ENCODE measurements at regions of chr5 and their contacts with region 1.

Region 1: GRCh38 chr5:55601204-55601618 is 66.4 kb upstream of the PLPP1 start:
- DNase-seq: peak; percentile 74 to 90
- ATAC-seq: peak; percentile 71 to 91 (median 85)
- H3K4me3 ChIP-seq: peak overlapping the region in 6 of 10 donors; percentile 18 to 46 (median 41)
- H3K27ac ChIP-seq: peak overlapping the region; percentile 86 to 98 (median 94)
- H3K4me1 ChIP-seq: peaks cover 21 to 86% (median 78%) of the 10 kb centered on the region in 9 donors
- H3K27me3 ChIP-seq: no peaks in the 10 kb centered on the region
- CTCF ChIP-seq: no peak

Region 2: GRCh38 chr5:55407059-55407684 is 194.0 kb before region 1 on chr5:
- intact Hi-C with region 1: loop called in 1 of 10 experiments (anchors 5 kb)
- DNase-seq: peak in 1 of 2 donors; percentile 20
- ATAC-seq: peak in 7 of 8 donors; percentile 53 to 90 (median 85)
- H3K4me3 ChIP-seq: no peak overlapping the region
- H3K27ac ChIP-seq: no peak overlapping the region
- H3K4me1 ChIP-seq: peaks cover 0 to 16% (median 7%) of the 10 kb centered on the region in 9 donors
- H3K27me3 ChIP-seq: no peaks in the 10 kb centered on the region
- CTCF ChIP-seq: peak; percentile 55 to 92 (median 80)

Region 3: DNA sequence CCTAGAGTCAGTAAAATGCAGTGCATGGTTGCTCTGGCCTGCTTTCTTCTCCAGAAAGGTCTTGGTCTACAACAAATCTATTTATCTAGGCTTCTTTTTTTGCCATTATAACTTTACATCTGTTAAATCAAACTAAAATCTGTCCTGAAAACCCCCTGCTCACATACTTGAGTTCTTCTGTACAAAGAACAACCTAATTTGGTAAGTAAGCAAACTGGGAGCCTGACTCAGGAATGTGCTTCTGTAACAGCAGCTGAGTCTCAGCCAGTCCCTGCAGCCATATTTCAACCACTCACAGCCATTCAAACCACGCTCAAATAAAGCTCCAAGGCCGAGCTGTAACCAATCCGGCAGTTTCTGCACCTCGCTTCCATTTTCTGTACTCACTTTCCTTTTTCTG is 162.2 kb before region 1 on chr5:
- intact Hi-C with region 1: loop called in 2 of 10 experiments (anchors 5 to 10 kb)
- DNase-seq: no peak
- ATAC-seq: peak in 5 of 8 donors; percentile 33 to 52 (median 46)
- H3K4me3 ChIP-seq: no peak overlapping the region
- H3K27ac ChIP-seq: peak overlapping the region; percentile 30 to 90 (median 80)
- H3K4me1 ChIP-seq: peaks cover 21 to 78% (median 54%) of the 10 kb centered on the region in 9 donors
- H3K27me3 ChIP-seq: no peaks in the 10 kb centered on the region
- CTCF ChIP-seq: no peak

Region 4: DNA sequence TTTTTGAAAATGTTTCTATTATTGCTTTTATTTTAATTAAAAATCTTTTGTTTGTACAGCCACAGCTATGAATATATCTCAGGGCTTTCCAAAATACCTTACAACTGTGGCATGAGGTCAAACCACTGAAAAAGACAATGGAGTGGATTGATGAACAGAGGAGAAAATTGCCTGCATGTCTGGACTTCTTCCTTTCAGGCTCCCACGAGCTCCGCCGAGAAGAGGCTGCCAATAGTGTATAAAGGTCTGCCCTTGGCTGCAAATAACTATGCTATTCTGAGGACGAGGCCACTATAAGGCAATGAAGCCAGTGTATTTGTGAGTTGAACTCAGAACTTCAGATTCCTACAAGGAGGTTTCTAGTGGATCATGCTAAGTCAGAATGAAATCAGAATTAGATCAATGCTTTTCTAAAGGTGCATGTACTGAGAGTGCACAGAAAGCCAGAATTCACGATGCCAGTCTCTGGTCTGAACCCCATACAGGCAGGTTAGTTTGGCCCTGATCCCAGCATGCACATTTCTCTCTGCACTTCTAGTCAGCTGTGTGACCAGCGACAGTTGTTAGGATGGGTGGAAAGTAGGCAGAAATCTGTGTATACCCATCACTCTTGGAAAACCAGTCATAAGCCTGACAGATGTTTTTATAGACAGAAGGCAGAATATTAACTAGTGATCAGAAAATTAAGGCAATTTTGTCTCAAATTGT is 23.7 kb before region 1 on chr5:
- intact Hi-C with region 1: loop called in 2 of 10 experiments (anchors 1 to 2 kb)
- DNase-seq: peak; percentile 50 to 80
- ATAC-seq: peak; percentile 90 to 96 (median 92)
- H3K4me3 ChIP-seq: no peak overlapping the region
- H3K27ac ChIP-seq: peak overlapping the region; percentile 63 to 93 (median 77)
- H3K4me1 ChIP-seq: peaks cover 14 to 56% (median 48%) of the 10 kb centered on the region in 9 donors
- H3K27me3 ChIP-seq: no peaks in the 10 kb centered on the region
- CTCF ChIP-seq: no peak

Region 5: GRCh38 chr5:55675119-55675518 is 73.9 kb after region 1 on chr5:
- intact Hi-C with region 1: loop called in 4 of 10 experiments (anchors 5 to 10 kb)
- DNase-seq: no peak
- ATAC-seq: no peak
- H3K4me3 ChIP-seq: no peak overlapping the region
- H3K27ac ChIP-seq: peak overlapping the region in 3 of 10 donors; percentile 16 to 32 (median 28)
- H3K4me1 ChIP-seq: peaks cover 0 to 48% (median 20%) of the 10 kb centered on the region in 9 donors
- H3K27me3 ChIP-seq: no peaks in the 10 kb centered on the region
- CTCF ChIP-seq: no peak

Region 6: GRCh38 chr5:55691265-55692105 is 90.3 kb after region 1 on chr5:
- intact Hi-C with region 1: loop called in 3 of 10 experiments (anchors 5 to 10 kb)
- DNase-seq: no peak
- ATAC-seq: peak; percentile 65 to 86 (median 73)
- H3K4me3 ChIP-seq: peak overlapping the region in 3 of 10 donors; percentile 11 to 19 (median 19)
- H3K27ac ChIP-seq: peak overlapping the region in 6 of 10 donors; percentile 5 to 52 (median 30)
- H3K4me1 ChIP-seq: peaks cover 6 to 34% (median 21%) of the 10 kb centered on the region in 9 donors
- H3K27me3 ChIP-seq: no peaks in the 10 kb centered on the region
- CTCF ChIP-seq: peak; percentile 42 to 83 (median 72)